ENCODE measurements at regions of chr9 and their contacts with region 1.

Region 1: GRCh38 chr9:90870621-90871326 is 69.2 kb downstream of the SYK start:
- DNase-seq: no peak
- H3K4me3 ChIP-seq: no peak overlapping the region
- H3K27ac ChIP-seq: no peak overlapping the region
- H3K4me1 ChIP-seq: peaks cover 0 to 2% (median 0%) of the 10 kb centered on the region in 4 donors
- H3K27me3 ChIP-seq: no peaks in the 10 kb centered on the region
- CTCF ChIP-seq: peak; percentile 35 to 82 (median 66)
- EP300 ChIP-seq: no peak
- POLR2A ChIP-seq: no peak

Region 2: GRCh38 chr9:90141723-90142122 is 729.1 kb before region 1 on chr9:
- intact Hi-C with region 1: loop called (anchors 2 kb)
- DNase-seq: no peak
- H3K4me3 ChIP-seq: no peak overlapping the region
- H3K27ac ChIP-seq: no peak overlapping the region
- H3K4me1 ChIP-seq: peaks cover 0 to 11% (median 0%) of the 10 kb centered on the region in 4 donors
- H3K27me3 ChIP-seq: no peaks in the 10 kb centered on the region
- CTCF ChIP-seq: peak in 3 of 4 experiments; percentile 37 to 42 (median 39)
- EP300 ChIP-seq: no peak
- POLR2A ChIP-seq: no peak

Region 3: GRCh38 chr9:90964101-90965020 is 93.6 kb after region 1 on chr9:
- intact Hi-C with region 1: no loop called
- DNase-seq: no peak
- H3K4me3 ChIP-seq: peak overlapping the region; percentile 26 to 43 (median 36)
- H3K27ac ChIP-seq: peak overlapping the region in 3 of 4 donors; percentile 39 to 81 (median 67)
- H3K4me1 ChIP-seq: peaks cover 0 to 3% (median 0%) of the 10 kb centered on the region in 4 donors
- H3K27me3 ChIP-seq: no peaks in the 10 kb centered on the region
- CTCF ChIP-seq: peak in 1 of 4 experiments; percentile 11
- EP300 ChIP-seq: no peak
- POLR2A ChIP-seq: no peak

Measured in sigmoid colon (tissue), 7 donors.